ENCODE measurements at regions of chr15 and their contacts with region 1.

Region 1: DNA sequence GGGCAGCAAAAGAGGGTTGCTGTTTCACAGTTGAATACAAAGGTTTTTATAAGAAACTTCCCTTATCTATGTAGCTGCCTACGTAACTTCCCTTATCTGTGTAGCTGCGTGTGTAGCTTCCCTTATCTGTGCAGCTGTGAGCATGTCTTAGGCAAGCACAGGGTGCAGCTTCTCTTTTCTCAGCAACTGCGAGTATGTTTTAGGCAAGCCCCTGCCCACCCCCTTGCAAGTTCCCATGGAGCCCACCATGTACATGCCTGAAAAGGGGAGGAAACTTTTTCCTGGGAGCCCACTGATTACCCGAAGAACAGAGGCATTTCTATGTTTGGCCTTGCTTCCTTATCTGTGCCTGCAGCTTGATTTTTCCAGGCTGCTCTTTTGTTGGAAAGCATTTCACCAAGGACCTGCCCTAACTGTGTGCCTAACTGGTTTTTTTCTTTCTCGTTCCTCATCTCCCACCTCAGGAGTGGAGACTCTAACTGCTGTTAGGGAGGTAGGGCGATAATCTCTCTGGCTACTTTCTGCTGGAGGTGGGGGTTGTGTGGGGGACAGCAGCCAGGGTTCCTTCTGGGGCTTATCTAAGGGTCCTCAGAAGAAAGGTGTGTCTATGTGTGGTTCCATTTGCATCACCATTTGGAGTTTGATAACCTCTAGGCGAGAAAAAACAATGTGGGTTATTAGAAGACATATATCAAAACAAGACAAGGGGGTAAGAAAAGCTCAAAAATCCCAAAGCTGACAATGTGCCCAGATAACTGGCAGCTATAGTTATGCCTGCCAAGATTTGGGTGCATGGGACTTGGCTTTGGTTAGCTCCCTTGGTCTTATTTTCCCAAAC is 26.0 kb downstream of the SORD start:
- DNase-seq: no peak
- ATAC-seq: peak; percentile 55 to 78

Region 2: GRCh38 chr15:45118131-45118588 is 69.1 kb after region 1 on chr15:
- intact Hi-C with region 1: loop called in 1 of 2 experiments (anchors 5 kb)
- DNase-seq: peak; percentile 90
- ATAC-seq: peak; percentile 95 to 96

Measured in left cardiac atrium (tissue), 4 donors.